PC-3 (cell line): ENCODE measurements at regions of chr14 and their contacts with region 1.

Region 1: GRCh38 chr14:92680781-92681650 is 67.4 kb downstream of the LGMN start:
- DNase-seq: peak; percentile 92
- ATAC-seq: peak; percentile 93
- H3K4me3 ChIP-seq: no peak overlapping the region
- H3K27ac ChIP-seq: peak overlapping the region; percentile 82
- H3K4me1 ChIP-seq: peaks cover 12% of the 10 kb centered on the region
- H3K27me3 ChIP-seq: no peaks in the 10 kb centered on the region
- CTCF ChIP-seq: peak; percentile 94

Region 2: GRCh38 chr14:92135267-92135666 is 545.7 kb before region 1 on chr14:
- CTCF ChIA-PET with region 1: no interaction called
- POLR2A ChIA-PET with region 1: no interaction called
- intact Hi-C with region 1: loop called (anchors 5 kb)
- DNase-seq: peak; percentile 43
- ATAC-seq: no peak; the same call in 1 of the 2 replicates
- H3K4me3 ChIP-seq: no peak overlapping the region
- H3K27ac ChIP-seq: no peak overlapping the region
- H3K4me1 ChIP-seq: no peaks in the 10 kb centered on the region
- H3K27me3 ChIP-seq: no peaks in the 10 kb centered on the region
- CTCF ChIP-seq: peak; percentile 77

Region 3: GRCh38 chr14:92585981-92586937 is 94.8 kb before region 1 on chr14:
- CTCF ChIA-PET with region 1: interaction called, 3 read pairs
- POLR2A ChIA-PET with region 1: no interaction called
- intact Hi-C with region 1: loop called (anchors 1 kb)
- DNase-seq: peak; percentile 77
- ATAC-seq: peak; percentile 79
- H3K4me3 ChIP-seq: no peak overlapping the region
- H3K27ac ChIP-seq: peak overlapping the region; percentile 64
- H3K4me1 ChIP-seq: peaks cover 23% of the 10 kb centered on the region
- H3K27me3 ChIP-seq: no peaks in the 10 kb centered on the region
- CTCF ChIP-seq: no peak

Region 4: GRCh38 chr14:92890830-92891588 is 210.0 kb after region 1 on chr14:
- CTCF ChIA-PET with region 1: no interaction called
- POLR2A ChIA-PET with region 1: no interaction called
- intact Hi-C with region 1: no loop called
- DNase-seq: peak; percentile 22
- ATAC-seq: peak; percentile 24; the same call in 1 of the 2 replicates
- H3K4me3 ChIP-seq: no peak overlapping the region
- H3K27ac ChIP-seq: no peak overlapping the region
- H3K4me1 ChIP-seq: no peaks in the 10 kb centered on the region
- H3K27me3 ChIP-seq: peaks cover 13% of the 10 kb centered on the region
- CTCF ChIP-seq: no peak